Naive thymus-derived CD8-positive, alpha-beta T cell (primary cell): ENCODE measurements at regions of chr19 and their contacts with region 1.

Region 1: DNA sequence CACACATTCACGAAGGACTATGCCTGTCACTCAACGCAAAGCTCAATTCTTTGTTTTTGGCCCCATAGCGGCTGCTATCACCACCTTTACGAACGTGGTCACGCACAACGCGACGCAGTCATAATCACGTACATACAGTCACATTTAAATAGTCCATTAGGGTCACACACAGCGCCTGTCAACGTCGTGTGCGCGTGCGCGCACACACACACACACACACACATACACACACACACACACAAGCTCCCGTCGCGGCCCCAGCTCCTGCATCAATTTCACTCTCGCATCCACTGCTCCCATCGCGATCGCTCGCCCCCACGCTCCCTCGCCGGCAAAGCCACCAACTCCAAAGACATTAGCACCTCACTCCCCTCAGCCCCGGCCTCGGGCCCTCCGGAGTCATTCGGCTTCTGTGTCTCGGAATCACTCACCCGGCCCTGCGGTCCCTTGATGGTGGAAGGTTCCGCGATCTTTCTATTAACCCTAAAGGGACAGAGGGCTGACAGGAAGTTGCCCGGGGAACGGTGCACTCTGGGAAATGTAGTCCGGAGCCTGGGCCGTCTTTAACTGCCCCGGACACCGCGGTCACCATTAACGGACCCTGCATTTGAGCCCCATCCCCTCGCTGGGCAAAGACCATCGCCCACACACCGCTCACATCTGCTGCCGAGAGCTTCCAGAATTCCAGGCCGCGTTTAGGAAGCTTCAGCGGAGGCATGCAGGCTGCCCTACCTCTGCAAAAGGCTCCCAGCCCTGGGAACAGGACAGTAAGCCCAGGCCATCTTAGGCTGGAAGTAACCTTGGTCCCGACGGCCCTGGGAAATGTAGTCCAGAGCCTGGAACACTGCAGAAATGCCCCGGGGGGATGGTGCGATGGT is at the start of gene ZNF790:
- DNase-seq: peak; percentile 59 to 90 (median 84)
- ATAC-seq: peak; percentile 90 to 92
- H3K4me3 Mint-ChIP-seq: peak within 1 kb of the TSS in 1 of 10 donors; percentile 63
- H3K27ac Mint-ChIP-seq: peak within 1 kb of the TSS in 5 of 10 donors; percentile 44 to 92 (median 63)
- H3K4me1 Mint-ChIP-seq: peaks cover 3 to 15% (median 9%) of the 10 kb centered on the region in 4 donors
- H3K27me3 Mint-ChIP-seq: no peaks in the 10 kb centered on the region
- polyA plus RNA-seq, gene ZNF790: 5.1 to 6.6 (median 5.7) TPM

Region 2: GRCh38 chr19:36709423-36709822 is 128.7 kb before region 1 on chr19:
- POLR2A ChIA-PET with region 1: no interaction called
- DNase-seq: no peak
- ATAC-seq: no peak
- H3K4me3 Mint-ChIP-seq: peak overlapping the region in 1 of 10 donors; percentile 29
- H3K27ac Mint-ChIP-seq: no peak overlapping the region
- H3K4me1 Mint-ChIP-seq: peaks cover 0 to 3% (median 0%) of the 10 kb centered on the region in 4 donors
- H3K27me3 Mint-ChIP-seq: no peaks in the 10 kb centered on the region

Region 3: DNA sequence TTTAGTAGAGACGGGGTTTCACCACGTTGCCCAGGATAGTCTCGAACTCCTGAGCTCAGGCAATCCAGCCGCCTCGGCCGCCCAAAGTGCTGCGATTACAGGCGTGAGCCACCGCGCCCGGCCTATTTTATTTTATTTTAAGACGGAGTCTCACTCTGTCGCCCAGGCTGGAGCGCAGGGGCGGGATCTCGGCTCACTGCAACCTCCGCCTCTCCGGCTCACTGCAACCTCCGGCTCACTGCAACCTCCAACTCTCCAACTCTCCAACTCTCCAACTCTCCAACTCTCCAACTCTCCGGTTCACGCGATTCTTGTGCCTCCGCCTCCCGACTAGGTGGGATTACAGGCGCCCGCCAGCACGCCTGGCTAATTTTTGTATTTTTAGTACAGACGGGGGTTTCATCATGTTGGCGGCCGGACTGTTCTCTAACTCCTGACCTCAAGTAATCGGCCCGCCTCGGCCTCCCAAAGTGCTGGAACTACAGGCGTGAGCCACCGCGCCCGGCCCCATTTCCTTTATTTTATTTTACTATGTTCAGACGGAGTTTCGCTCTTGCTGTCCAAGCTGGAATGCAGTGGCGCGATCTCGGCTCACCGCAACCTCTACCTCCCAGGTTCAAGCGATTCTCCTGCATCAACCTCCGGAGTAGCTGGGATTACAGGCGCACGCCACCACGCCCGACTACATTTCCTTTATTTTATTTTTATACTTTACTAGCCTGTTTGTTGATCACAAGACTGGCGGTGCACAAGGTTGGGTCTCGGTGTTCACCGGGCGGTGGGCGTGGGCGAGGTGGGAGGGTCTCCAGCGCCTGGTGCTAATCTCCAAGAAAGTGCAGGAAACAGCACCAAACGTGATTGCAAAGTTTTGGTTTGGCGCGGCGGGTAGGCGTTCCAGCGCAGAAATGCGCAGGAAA is 41.8 kb before region 1 on chr19:
- POLR2A ChIA-PET with region 1: interaction called, 19 read pairs
- DNase-seq: no peak
- ATAC-seq: no peak
- H3K4me3 Mint-ChIP-seq: peak overlapping the region; percentile 95 to 100 (median 98)
- H3K27ac Mint-ChIP-seq: peak overlapping the region; percentile 92 to 100 (median 99)
- H3K4me1 Mint-ChIP-seq: peaks cover 4 to 20% (median 12%) of the 10 kb centered on the region in 4 donors
- H3K27me3 Mint-ChIP-seq: peaks cover 6 to 10% (median 8%) of the 10 kb centered on the region in 5 donors

Region 4: GRCh38 chr19:36891768-36892357 is 53.7 kb after region 1 on chr19:
- POLR2A ChIA-PET with region 1: no interaction called
- DNase-seq: no peak
- ATAC-seq: no peak
- H3K4me3 Mint-ChIP-seq: no peak overlapping the region
- H3K27ac Mint-ChIP-seq: peak overlapping the region in 1 of 10 donors; percentile 34
- H3K4me1 Mint-ChIP-seq: peaks cover 0 to 3% (median 0%) of the 10 kb centered on the region in 4 donors
- H3K27me3 Mint-ChIP-seq: no peaks in the 10 kb centered on the region

Region 5: DNA sequence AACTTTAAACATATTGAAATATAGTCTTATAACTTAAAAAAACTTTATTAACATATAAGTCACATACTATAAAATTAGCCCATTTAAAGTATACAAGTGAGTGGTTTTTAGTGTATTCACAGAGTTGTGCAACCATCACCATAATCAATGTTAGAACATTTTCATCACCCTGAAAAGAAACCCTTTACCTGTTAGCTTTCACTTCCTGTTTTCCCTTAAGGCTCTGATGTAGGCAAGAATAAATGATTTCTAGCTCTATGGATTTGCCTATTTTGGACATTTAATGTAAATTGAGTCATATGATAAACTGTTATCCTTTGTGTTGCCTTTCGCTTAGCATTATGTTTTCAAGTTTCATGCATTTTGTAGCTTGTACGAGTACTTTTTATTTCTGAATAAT is 93.5 kb after region 1 on chr19:
- POLR2A ChIA-PET with region 1: no interaction called
- DNase-seq: no peak
- ATAC-seq: no peak
- H3K4me3 Mint-ChIP-seq: no peak overlapping the region
- H3K27ac Mint-ChIP-seq: no peak overlapping the region
- H3K4me1 Mint-ChIP-seq: no peaks in the 10 kb centered on the region
- H3K27me3 Mint-ChIP-seq: no peaks in the 10 kb centered on the region